ENCODE measurements at regions of chr19 and their contacts with region 1.

Region 1: DNA sequence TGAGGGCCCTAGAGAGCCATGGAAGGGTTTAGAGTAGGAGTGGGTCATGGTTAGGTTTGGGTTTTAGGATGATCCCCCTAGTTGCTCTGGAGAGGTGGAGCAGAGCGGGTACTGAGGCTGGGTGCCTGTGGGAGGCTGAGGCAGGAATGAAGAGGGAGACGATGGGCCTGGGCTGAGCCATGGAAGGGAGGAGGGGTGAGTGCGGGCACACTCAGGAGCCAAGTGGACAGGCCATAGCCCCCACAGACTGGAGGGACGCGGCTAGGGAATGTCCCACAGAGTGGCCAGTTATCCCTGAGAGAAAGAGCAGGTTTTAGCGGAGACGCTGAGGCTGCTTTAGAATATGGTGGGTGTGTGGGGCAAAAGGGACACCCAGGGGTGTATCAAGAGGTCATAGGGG is 6.0 kb upstream of the CATSPERG start:
- DNase-seq: no peak
- H3K4me3 ChIP-seq: no peak overlapping the region
- H3K27ac ChIP-seq: no peak overlapping the region
- H3K4me1 ChIP-seq: no peaks in the 10 kb centered on the region
- H3K27me3 ChIP-seq: no peaks in the 10 kb centered on the region
- CTCF ChIP-seq: no peak
- POLR2A ChIP-seq: no peak

Region 2: GRCh38 chr19:38239816-38240215 is 89.8 kb before region 1 on chr19:
- intact Hi-C with region 1: loop called (anchors 5 kb)
- DNase-seq: no peak
- H3K4me3 ChIP-seq: no peak overlapping the region
- H3K27ac ChIP-seq: no peak overlapping the region
- H3K4me1 ChIP-seq: peaks cover 10% of the 10 kb centered on the region
- H3K27me3 ChIP-seq: no peaks in the 10 kb centered on the region
- CTCF ChIP-seq: no peak
- POLR2A ChIP-seq: no peak